Natural killer cell (primary cell): ENCODE measurements at regions of chr6 and their contacts with region 1.

Region 1: DNA sequence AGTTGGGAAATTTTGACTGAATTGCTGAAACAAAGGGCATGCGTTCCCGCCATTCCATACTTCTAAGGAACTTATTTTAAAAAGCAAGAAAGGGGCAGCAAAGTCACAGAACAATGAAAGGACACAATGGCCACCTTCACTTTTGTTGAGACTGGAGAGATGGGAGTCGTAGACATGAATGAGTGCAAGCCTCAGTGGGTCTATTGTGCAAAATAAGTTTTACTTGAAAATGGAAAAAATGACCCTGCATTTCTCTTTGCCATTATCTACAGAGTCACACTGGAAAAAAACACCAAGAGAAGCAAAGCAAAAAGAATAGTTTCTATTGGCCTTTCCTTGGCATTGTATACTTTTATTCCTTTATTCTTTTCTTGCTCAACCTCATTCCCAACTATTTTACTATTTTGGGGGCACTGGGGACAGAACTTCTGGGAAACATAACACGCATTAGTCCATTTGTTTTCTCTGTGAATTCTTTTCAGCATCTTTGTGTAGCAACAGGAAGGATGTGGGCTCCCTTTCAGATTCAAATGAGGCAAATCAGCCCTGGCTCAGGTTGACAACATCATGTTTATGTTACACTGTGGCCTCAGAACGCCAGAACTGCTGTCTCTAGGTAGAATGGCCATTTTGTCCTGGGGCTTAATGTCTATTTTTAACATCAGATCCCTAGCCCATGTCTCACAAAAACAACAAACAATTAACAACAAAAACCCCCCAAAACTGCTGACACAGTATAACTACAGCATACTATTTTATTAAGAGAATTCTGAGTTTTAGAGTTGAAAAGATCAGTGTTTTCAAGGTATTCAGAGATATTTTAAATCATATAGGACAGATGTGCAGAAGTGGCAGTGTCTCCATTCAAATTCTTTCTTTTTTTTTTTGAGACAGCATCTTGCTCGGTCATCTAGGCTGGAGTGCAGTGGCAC is 122.2 kb downstream of the FYN start:
- DNase-seq: peak; percentile 53 to 92
- ATAC-seq: peak; percentile 70 to 83 (median 80)
- H3K4me3 ChIP-seq: no peak overlapping the region
- H3K4me3 Mint-ChIP-seq: peak overlapping the region; percentile 86
- H3K27ac ChIP-seq: peak overlapping the region; percentile 99
- H3K27ac Mint-ChIP-seq: peak overlapping the region; percentile 92 to 100
- H3K4me1 ChIP-seq: peaks cover 57% of the 10 kb centered on the region
- H3K4me1 Mint-ChIP-seq: peaks cover 95 to 96% of the 10 kb centered on the region in 2 donors
- H3K27me3 ChIP-seq: no peaks in the 10 kb centered on the region
- H3K27me3 Mint-ChIP-seq: no peaks in the 10 kb centered on the region
- CTCF ChIP-seq: no peak

Region 2: DNA sequence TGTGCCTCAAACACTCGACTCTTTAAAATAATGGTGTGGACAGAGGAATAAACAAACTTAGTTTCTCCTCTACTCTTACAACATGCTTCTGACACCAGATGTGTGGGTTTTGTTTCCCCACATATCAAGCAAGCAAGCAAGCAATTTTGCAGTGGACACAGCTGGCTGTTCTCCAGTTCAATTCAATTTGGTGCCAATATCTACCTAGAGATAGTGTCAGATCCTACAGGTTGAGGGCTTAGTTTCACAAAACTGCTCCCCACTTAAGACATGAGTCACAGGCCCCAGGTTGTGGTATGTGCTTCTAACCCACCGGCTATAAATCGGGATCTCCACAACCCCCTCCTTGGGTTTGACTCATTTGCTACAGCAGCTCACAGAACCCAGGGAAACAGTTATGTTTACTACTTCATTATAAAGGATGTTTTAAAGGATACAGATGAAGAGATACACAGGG is 13.9 kb before region 1 on chr6:
- intact Hi-C with region 1: loop called (anchors 1 kb)
- DNase-seq: peak in 1 of 2 donors; percentile 57
- ATAC-seq: peak; percentile 28 to 41 (median 36)
- H3K4me3 ChIP-seq: no peak overlapping the region
- H3K4me3 Mint-ChIP-seq: peak overlapping the region; percentile 43
- H3K27ac ChIP-seq: peak overlapping the region; percentile 84
- H3K27ac Mint-ChIP-seq: peak overlapping the region; percentile 90 to 100
- H3K4me1 ChIP-seq: peaks cover 93% of the 10 kb centered on the region
- H3K4me1 Mint-ChIP-seq: peaks cover 97% of the 10 kb centered on the region in 2 donors
- H3K27me3 ChIP-seq: no peaks in the 10 kb centered on the region
- H3K27me3 Mint-ChIP-seq: no peaks in the 10 kb centered on the region
- CTCF ChIP-seq: no peak

Region 3: DNA sequence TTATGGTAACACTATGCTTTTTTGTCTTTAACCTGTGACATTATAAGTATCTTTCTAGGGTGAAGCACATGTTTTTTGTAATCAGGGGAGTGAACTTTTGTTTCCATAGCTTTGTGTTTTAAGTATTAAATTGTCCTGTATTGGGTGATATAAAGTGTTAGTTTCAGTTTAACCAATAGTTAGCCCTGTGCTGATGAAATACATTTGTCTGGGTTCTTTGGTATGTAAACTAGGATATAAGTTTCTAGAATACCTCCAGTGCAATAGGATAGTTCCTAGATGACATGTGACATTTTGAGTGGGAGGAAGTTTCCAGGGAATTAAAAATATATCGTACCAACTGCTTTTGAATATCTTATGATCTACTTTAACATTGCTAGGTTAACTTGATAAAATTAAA is 1495.2 kb after region 1 on chr6:
- intact Hi-C with region 1: no loop called
- DNase-seq: no peak
- ATAC-seq: no peak
- H3K4me3 ChIP-seq: no peak overlapping the region
- H3K4me3 Mint-ChIP-seq: no peak overlapping the region
- H3K27ac ChIP-seq: no peak overlapping the region
- H3K27ac Mint-ChIP-seq: no peak overlapping the region
- H3K4me1 ChIP-seq: no peaks in the 10 kb centered on the region
- H3K4me1 Mint-ChIP-seq: no peaks in the 10 kb centered on the region
- H3K27me3 ChIP-seq: no peaks in the 10 kb centered on the region
- H3K27me3 Mint-ChIP-seq: no peaks in the 10 kb centered on the region
- CTCF ChIP-seq: no peak